ENCODE measurements at regions of chr21 and their contacts with region 1.

Region 1: GRCh38 chr21:45421241-45422118 is 16.5 kb downstream of the COL18A1 start:
- DNase-seq: no peak
- ATAC-seq: no peak
- H3K4me3 ChIP-seq: no peak overlapping the region
- H3K27ac ChIP-seq: no peak overlapping the region
- H3K4me1 ChIP-seq: peaks cover 0 to 80% of the 10 kb centered on the region in 2 experiments; a peak in 3 of 5 replicates
- H3K27me3 ChIP-seq: no peaks in the 10 kb centered on the region; a peak in 2 of 5 replicates
- CTCF ChIP-seq: no peak
- EP300 ChIP-seq: no peak
- POLR2A ChIP-seq: no peak
- RAD21 ChIP-seq: no peak

Region 2: DNA sequence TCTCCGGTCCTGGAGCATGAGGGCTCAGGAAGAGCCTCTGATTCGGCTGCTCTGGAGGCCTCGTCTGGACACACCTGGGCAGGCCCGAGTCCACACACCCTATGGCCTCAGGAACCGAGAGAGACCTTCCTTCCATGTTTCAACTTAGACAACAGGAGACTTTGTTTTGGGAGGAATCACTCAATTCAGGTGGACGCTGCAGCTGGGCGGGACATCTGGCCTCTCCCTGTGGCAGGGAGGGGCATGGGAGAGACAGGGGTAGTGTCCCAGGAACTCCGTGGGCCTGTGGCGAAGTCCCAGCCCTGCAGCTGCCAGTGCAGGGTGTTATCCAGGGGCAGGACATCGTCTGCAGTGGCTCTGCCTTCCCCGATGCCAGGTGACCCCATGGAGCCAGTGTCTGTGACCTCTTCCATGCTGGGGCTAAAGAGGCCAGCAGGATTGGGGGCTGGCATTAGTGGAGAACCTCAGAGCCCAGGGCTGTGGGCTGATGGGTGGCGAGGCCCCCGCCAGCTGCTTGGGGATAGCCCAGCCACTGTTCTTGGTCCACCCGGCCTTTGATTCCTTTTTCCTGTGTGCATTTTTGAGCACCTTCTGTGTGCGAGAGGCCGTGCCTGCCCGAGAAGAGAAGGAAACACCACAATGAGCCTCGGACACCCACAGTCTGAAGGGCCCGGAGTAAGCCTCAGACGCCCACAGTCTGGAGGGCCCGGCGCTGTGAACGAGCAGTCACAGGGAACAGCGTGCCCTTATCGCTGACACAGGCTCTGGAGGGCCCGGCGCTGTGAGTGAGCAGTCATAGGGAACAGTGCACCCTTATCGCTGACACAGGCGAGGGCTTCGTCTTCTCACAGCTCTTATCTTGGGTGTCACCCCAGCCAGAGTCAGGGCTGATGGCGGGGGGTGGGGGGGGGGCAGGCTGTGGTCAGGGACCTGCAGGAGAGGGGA is 10.3 kb before region 1 on chr21:
- CTCF ChIA-PET with region 1: no interaction called
- POLR2A ChIA-PET with region 1: interaction called, 15 read pairs
- in situ Hi-C with region 1: no loop called
- intact Hi-C with region 1: no loop called
- DNase-seq: peak; percentile 97 to 99 (median 98)
- ATAC-seq: peak; percentile 98
- H3K4me3 ChIP-seq: no peak overlapping the region
- H3K27ac ChIP-seq: peak overlapping the region; percentile 83
- H3K4me1 ChIP-seq: peaks cover 47 to 93% of the 10 kb centered on the region in 2 experiments
- H3K27me3 ChIP-seq: no peaks in the 10 kb centered on the region
- CTCF ChIP-seq: no peak
- EP300 ChIP-seq: peak; percentile 95
- POLR2A ChIP-seq: no peak
- RAD21 ChIP-seq: peak in 1 of 2 experiments; percentile 29; a peak in 1 of 4 replicates